IMR-90 (cell line): ENCODE measurements at regions of chr10 and their contacts with region 1.

Region 1: GRCh38 chr10:19719284-19719683 is 96.9 kb upstream of the PLXDC2 start:
- DNase-seq: peak; percentile 87
- ATAC-seq: peak; percentile 93
- H3K4me3 ChIP-seq: no peak overlapping the region
- H3K27ac ChIP-seq: no peak overlapping the region; the same call in 1 of the 2 replicates
- H3K4me1 ChIP-seq: peaks cover 5% of the 10 kb centered on the region
- H3K27me3 ChIP-seq: no peaks in the 10 kb centered on the region
- CTCF ChIP-seq: no peak
- POLR2A ChIP-seq: no peak
- RAD21 ChIP-seq: no peak

Region 2: DNA sequence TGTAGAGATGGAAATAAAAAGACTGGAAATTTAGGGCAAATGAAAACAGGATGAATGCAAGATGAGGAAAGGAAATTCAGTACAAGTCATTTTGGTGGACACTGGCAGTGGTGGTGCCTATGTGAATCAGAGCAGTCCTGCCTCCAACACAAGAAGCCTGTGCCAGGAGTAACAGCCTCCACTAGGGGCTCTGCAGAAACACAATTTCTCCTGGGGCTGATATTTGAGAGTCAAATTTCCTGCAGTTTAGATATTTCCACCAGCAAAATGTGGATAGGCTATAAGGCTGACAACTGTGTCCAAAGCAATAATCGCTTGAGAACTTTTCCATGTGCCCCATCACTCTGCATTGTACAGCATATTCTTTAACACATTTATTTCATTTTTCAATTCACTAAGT is 92.3 kb after region 1 on chr10:
- CTCF ChIA-PET with region 1: no interaction called
- POLR2A ChIA-PET with region 1: no interaction called
- dilution Hi-C with region 1: no loop called
- in situ Hi-C with region 1: no loop called
- intact Hi-C with region 1: loop called (anchors 5 kb)
- DNase-seq: peak; percentile 33
- ATAC-seq: peak; percentile 19; the same call in 1 of the 2 replicates
- H3K4me3 ChIP-seq: no peak overlapping the region
- H3K27ac ChIP-seq: no peak overlapping the region
- H3K4me1 ChIP-seq: no peaks in the 10 kb centered on the region
- H3K27me3 ChIP-seq: peaks cover 3% of the 10 kb centered on the region; the same call in 1 of the 2 replicates
- CTCF ChIP-seq: peak; percentile 49
- POLR2A ChIP-seq: no peak
- RAD21 ChIP-seq: peak; percentile 47

Region 3: DNA sequence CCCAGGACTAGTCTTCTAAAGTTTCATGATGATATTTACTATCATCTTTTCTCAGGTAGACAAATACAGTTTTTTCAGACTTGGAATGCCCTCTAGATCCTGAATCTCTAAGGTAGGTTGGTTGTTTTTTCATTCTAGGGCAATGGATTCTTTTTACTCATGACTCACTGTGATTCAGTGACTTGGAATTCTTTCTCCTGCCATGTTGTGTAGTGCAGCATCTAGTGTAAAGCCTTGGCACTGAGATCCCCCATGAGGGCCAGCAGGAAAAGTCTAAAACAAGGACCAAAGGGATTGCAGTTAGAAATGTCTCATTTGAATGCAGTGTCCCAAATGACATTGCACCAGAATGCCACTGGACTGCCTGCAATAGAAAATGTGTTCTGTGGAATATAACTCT is 747.4 kb after region 1 on chr10:
- CTCF ChIA-PET with region 1: no interaction called
- POLR2A ChIA-PET with region 1: no interaction called
- dilution Hi-C with region 1: no loop called
- in situ Hi-C with region 1: no loop called
- intact Hi-C with region 1: no loop called
- DNase-seq: peak; percentile 2
- ATAC-seq: no peak
- H3K4me3 ChIP-seq: no peak overlapping the region
- H3K27ac ChIP-seq: no peak overlapping the region
- H3K4me1 ChIP-seq: no peaks in the 10 kb centered on the region
- H3K27me3 ChIP-seq: no peaks in the 10 kb centered on the region
- CTCF ChIP-seq: no peak
- POLR2A ChIP-seq: no peak
- RAD21 ChIP-seq: no peak